CD4-positive, alpha-beta T cell (primary cell): ENCODE measurements at regions of chr12 and their contacts with region 1.

Region 1: DNA sequence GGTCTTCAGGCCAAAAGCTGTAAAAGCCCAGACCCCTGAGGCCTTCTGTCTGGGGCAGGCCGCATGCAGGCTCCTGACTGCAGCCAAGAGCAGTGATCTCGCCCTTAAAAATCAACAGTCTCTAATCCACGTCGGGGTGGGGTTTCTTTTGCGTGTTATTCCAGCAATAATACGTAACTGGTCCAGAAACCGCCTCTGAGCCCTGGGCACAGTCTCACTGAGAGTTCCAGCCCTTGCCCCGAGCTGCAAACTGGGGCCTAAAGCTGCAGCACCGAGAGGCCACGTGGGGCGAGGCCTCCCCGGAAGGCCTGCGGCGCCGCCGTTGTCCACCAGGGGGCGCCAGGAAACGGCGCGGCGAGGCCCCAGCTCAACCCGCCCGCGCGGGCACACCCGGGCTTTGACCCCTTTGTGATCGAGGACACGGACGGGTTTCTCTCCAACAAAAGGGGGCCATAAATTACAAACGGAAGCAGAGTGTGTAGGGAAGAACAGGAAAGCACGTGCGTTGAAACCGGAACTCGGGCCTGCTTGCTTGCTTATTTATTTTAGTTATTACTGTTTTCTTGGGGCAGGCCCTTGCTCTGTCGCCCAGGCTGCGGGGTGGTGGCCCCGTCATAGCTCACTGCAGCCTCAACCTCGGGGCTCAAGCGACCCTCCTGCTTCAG is 87.2 kb downstream of the NINJ2 start:
- DNase-seq: peak; percentile 59 to 91 (median 83)
- ATAC-seq: peak; percentile 99
- H3K4me3 ChIP-seq: peak overlapping the region; percentile 34
- H3K4me3 Mint-ChIP-seq: no peak overlapping the region
- H3K27ac ChIP-seq: no peak overlapping the region
- H3K27ac Mint-ChIP-seq: peak overlapping the region; percentile 22
- H3K4me1 ChIP-seq: peaks cover 20% of the 10 kb centered on the region
- H3K4me1 Mint-ChIP-seq: peaks cover 24% of the 10 kb centered on the region
- H3K27me3 ChIP-seq: no peaks in the 10 kb centered on the region
- H3K27me3 Mint-ChIP-seq: no peaks in the 10 kb centered on the region
- CTCF ChIP-seq: peak; percentile 98

Region 2: DNA sequence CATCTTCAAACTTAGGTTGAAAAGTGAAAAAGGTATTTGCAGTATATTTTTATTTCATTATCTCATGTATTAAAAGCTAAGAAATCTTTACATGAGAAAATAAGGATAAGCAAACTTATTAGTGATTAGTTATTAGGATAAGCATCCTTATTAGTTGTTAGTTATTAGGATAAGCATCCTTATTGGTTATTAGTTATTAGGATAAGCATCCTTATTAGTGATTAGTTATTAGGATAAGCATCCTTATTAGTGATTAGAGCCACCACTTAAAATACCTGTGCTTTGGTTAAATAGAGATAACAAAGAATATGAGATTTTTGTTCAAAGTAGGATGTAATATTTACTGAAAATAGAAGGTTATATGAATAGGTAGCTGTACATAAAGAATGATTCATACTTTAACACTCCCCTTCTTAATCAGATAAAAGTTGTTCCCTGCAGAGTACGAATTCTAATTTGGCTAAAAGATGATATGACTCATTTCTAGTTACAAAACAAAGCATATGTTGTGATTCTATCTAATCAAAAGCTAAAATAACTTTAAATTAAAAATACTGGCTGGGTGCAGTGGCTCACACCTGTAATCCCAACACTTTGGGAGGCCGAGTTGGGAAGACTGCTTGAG is 243.4 kb before region 1 on chr12:
- CTCF ChIA-PET with region 1: no interaction called
- POLR2A ChIA-PET with region 1: no interaction called
- intact Hi-C with region 1: no loop called
- DNase-seq: no peak
- ATAC-seq: no peak
- H3K4me3 ChIP-seq: no peak overlapping the region
- H3K4me3 Mint-ChIP-seq: no peak overlapping the region
- H3K27ac ChIP-seq: no peak overlapping the region
- H3K27ac Mint-ChIP-seq: no peak overlapping the region
- H3K4me1 ChIP-seq: no peaks in the 10 kb centered on the region
- H3K4me1 Mint-ChIP-seq: peaks cover 16% of the 10 kb centered on the region
- H3K27me3 ChIP-seq: no peaks in the 10 kb centered on the region
- H3K27me3 Mint-ChIP-seq: no peaks in the 10 kb centered on the region
- CTCF ChIP-seq: no peak

Region 3: DNA sequence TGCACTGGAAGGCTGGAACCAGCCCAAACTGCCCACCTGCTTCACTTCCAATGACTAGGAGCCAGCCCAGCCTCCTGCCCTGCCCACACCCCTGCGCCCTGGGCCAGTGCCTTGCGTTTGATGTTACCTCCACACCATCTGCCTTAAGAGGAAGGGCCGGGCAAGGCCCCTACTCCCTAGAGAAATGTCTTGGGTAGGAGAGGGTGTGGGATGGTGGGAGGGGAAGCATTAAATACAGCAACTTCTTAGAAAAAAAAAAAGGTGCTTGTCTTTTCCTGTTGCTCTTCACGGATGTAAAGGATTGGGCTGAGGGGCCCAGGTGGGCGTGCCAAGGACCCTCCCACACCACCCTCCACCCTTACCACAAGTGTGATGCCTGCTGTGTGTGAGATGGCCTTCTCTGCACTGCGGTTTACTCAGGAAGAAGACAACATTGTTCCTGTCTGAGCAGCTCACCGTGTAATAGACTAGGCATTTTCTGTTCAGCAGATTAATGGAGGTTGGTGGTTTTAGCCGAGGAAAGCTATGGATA is 12.8 kb before region 1 on chr12:
- CTCF ChIA-PET with region 1: interaction called, 9 read pairs
- POLR2A ChIA-PET with region 1: interaction called, 12 read pairs
- intact Hi-C with region 1: no loop called
- DNase-seq: peak; percentile 22 to 92 (median 71)
- ATAC-seq: peak; percentile 91
- H3K4me3 ChIP-seq: peak overlapping the region; percentile 47
- H3K4me3 Mint-ChIP-seq: peak overlapping the region; percentile 84
- H3K27ac ChIP-seq: peak overlapping the region; percentile 71 to 81
- H3K27ac Mint-ChIP-seq: peak overlapping the region; percentile 97
- H3K4me1 ChIP-seq: peaks cover 93% of the 10 kb centered on the region
- H3K4me1 Mint-ChIP-seq: peaks cover 92% of the 10 kb centered on the region
- H3K27me3 ChIP-seq: no peaks in the 10 kb centered on the region
- H3K27me3 Mint-ChIP-seq: no peaks in the 10 kb centered on the region
- CTCF ChIP-seq: no peak

Region 4: GRCh38 chr12:642633-643474 is 66.8 kb after region 1 on chr12:
- CTCF ChIA-PET with region 1: interaction called, 6 read pairs
- POLR2A ChIA-PET with region 1: interaction called, 9 read pairs
- intact Hi-C with region 1: loop called in 1 of 2 experiments (anchors 5 kb)
- DNase-seq: peak; percentile 49 to 92 (median 76)
- ATAC-seq: peak; percentile 74
- H3K4me3 ChIP-seq: peak overlapping the region; percentile 67
- H3K4me3 Mint-ChIP-seq: peak overlapping the region; percentile 84
- H3K27ac ChIP-seq: peak overlapping the region; percentile 84 to 85
- H3K27ac Mint-ChIP-seq: peak overlapping the region; percentile 93
- H3K4me1 ChIP-seq: peaks cover 63% of the 10 kb centered on the region
- H3K4me1 Mint-ChIP-seq: peaks cover 63% of the 10 kb centered on the region
- H3K27me3 ChIP-seq: no peaks in the 10 kb centered on the region
- H3K27me3 Mint-ChIP-seq: no peaks in the 10 kb centered on the region
- CTCF ChIP-seq: peak; percentile 15

Region 5: DNA sequence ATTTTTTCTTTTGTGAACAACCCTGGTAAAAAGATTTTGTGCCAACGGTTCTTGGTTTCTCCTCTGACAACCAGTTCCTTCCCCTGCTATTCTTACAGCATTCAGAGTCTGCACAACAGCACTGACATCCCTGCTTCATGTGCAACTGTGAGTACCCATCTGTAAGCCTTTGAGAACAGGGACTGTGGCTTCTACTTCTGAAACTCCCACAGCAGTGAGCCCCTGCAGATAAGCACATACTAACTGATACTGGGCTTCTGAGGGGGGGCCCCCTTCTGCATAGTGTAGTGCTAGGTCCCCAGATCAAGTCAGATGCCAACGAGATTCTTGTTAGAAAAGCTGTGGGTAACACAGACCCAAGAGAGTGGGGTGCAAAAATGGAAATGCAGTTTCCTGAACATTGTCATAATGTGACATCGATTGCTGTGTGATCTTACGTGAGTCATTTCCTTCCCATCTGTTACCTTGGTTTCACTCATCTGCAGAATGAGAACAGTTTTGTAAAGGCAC is 98.2 kb after region 1 on chr12:
- CTCF ChIA-PET with region 1: interaction called, 10 read pairs
- POLR2A ChIA-PET with region 1: no interaction called
- intact Hi-C with region 1: loop called in 1 of 2 experiments (anchors 10 kb)
- DNase-seq: peak; percentile 6 to 90 (median 53)
- ATAC-seq: peak; percentile 89
- H3K4me3 ChIP-seq: peak overlapping the region; percentile 11
- H3K4me3 Mint-ChIP-seq: peak overlapping the region; percentile 80
- H3K27ac ChIP-seq: peak overlapping the region; percentile 52 to 82
- H3K27ac Mint-ChIP-seq: peak overlapping the region; percentile 94
- H3K4me1 ChIP-seq: peaks cover 64% of the 10 kb centered on the region
- H3K4me1 Mint-ChIP-seq: peaks cover 68% of the 10 kb centered on the region
- H3K27me3 ChIP-seq: no peaks in the 10 kb centered on the region
- H3K27me3 Mint-ChIP-seq: no peaks in the 10 kb centered on the region
- CTCF ChIP-seq: no peak

Region 6: DNA sequence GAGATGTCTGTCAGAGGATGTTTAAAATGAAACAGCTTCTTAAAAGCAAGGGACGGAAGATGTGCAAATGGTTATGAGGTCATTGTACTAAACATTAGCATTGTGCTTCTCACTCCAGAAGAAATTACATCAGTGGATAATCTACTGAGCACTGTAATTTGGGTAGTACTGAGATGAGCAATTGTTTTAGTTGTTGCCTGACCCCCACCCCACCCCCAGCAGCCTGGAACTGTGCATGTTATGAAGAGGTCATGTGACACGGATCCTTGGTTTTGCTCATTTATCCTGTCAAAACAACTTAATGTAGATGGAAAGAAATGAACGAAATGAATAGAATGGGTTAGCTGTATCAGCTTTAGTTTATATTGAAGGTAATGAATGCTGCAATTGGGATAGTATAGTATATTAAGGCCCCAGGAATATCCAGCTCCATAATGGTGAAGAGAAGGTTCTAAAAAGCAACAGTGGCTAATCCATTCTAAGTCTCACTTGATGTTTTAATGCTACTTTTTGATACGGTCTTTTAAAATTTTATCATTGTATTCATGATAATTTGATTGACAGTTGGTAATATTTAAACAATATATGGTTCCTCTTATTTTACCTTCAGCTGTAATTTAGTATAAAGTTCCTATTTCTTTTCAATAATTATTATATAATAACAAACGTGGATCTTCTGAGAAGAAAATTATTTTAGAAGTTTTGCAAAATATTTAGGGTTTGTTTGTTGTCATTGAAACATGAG is 234.8 kb after region 1 on chr12:
- CTCF ChIA-PET with region 1: interaction called, 26 read pairs
- POLR2A ChIA-PET with region 1: interaction called, 13 read pairs
- intact Hi-C with region 1: loop called (anchors 1 kb)
- DNase-seq: no peak
- ATAC-seq: peak; percentile 34
- H3K4me3 ChIP-seq: no peak overlapping the region
- H3K4me3 Mint-ChIP-seq: peak overlapping the region; percentile 64
- H3K27ac ChIP-seq: peak overlapping the region in 1 of 2 donors; percentile 26
- H3K27ac Mint-ChIP-seq: peak overlapping the region; percentile 78
- H3K4me1 ChIP-seq: peaks cover 39% of the 10 kb centered on the region
- H3K4me1 Mint-ChIP-seq: peaks cover 83% of the 10 kb centered on the region
- H3K27me3 ChIP-seq: no peaks in the 10 kb centered on the region
- H3K27me3 Mint-ChIP-seq: no peaks in the 10 kb centered on the region
- CTCF ChIP-seq: no peak

Region 7: GRCh38 chr12:857611-858010 is 281.5 kb after region 1 on chr12:
- CTCF ChIA-PET with region 1: interaction called, 12 read pairs
- POLR2A ChIA-PET with region 1: no interaction called
- intact Hi-C with region 1: no loop called
- DNase-seq: no peak
- ATAC-seq: no peak
- H3K4me3 ChIP-seq: no peak overlapping the region
- H3K4me3 Mint-ChIP-seq: no peak overlapping the region
- H3K27ac ChIP-seq: no peak overlapping the region
- H3K27ac Mint-ChIP-seq: no peak overlapping the region
- H3K4me1 ChIP-seq: no peaks in the 10 kb centered on the region
- H3K4me1 Mint-ChIP-seq: peaks cover 34% of the 10 kb centered on the region
- H3K27me3 ChIP-seq: no peaks in the 10 kb centered on the region
- H3K27me3 Mint-ChIP-seq: no peaks in the 10 kb centered on the region
- CTCF ChIP-seq: no peak

Region 8: GRCh38 chr12:1093166-1093751 is 517.2 kb after region 1 on chr12:
- CTCF ChIA-PET with region 1: interaction called, 3 read pairs
- POLR2A ChIA-PET with region 1: no interaction called
- intact Hi-C with region 1: loop called (anchors 5 kb)
- DNase-seq: peak in 8 of 14 experiments; percentile 3 to 68 (median 28)
- ATAC-seq: peak; percentile 77
- H3K4me3 ChIP-seq: no peak overlapping the region
- H3K4me3 Mint-ChIP-seq: no peak overlapping the region
- H3K27ac ChIP-seq: no peak overlapping the region
- H3K27ac Mint-ChIP-seq: no peak overlapping the region
- H3K4me1 ChIP-seq: no peaks in the 10 kb centered on the region
- H3K4me1 Mint-ChIP-seq: peaks cover 16% of the 10 kb centered on the region
- H3K27me3 ChIP-seq: no peaks in the 10 kb centered on the region
- H3K27me3 Mint-ChIP-seq: no peaks in the 10 kb centered on the region
- CTCF ChIP-seq: peak; percentile 71